H1 (cell line): ENCODE measurements at regions of chr11 and their contacts with region 1.

Region 1: GRCh38 chr11:19071255-19071654 is 10.7 kb upstream of the MRGPRX2 start:
- DNase-seq: peak; percentile 43 to 75
- H3K4me3 ChIP-seq: no peak overlapping the region
- H3K27ac ChIP-seq: no peak overlapping the region
- H3K4me1 ChIP-seq: peaks cover 2 to 8% (median 7%) of the 10 kb centered on the region in 4 experiments; a peak in 4 of 7 replicates
- H3K27me3 ChIP-seq: no peaks in the 10 kb centered on the region
- CTCF ChIP-seq: peak; percentile 57 to 100 (median 95)
- EP300 ChIP-seq: no peak; a peak in 1 of 3 replicates
- POLR2A ChIP-seq: no peak
- RAD21 ChIP-seq: peak; percentile 93 to 96

Region 2: DNA sequence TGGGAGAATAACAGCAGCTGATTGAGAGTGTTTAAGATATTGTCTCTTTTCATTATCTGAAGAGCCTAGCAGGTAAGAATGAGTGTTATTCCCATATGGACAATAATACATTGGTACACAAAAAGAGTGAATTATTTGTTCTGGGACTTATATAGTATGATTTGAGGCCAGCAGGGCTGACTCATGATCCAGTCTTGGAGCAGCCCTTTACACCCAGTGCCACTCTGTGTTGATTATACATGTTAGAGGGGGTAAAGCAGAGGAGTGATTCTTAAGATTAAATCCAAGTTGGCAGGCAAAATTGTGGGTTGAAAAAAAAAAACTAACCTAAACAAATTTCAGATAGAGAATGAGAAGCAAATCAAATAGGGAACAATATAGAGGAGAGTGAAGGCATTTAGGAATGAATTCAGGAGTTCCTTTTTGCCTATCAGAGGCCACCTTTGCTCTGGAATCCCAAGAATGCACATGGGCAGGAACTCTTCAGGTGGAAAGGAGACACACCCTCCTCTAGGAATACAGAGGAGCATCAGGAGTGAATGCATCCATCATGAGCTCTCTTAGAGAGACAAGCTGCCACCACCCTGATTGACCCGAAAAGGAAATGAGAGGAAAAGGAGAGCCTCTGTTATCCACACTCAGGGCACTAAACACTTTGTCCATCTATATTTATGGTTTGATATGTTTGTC is 112.9 kb before region 1 on chr11:
- CTCF ChIA-PET with region 1: no interaction called
- POLR2A ChIA-PET with region 1: no interaction called
- DNase-seq: peak in 1 of 2 experiments; percentile 9
- H3K4me3 ChIP-seq: no peak overlapping the region
- H3K27ac ChIP-seq: no peak overlapping the region
- H3K4me1 ChIP-seq: peaks cover 0 to 10% (median 5%) of the 10 kb centered on the region in 4 experiments; a peak in 3 of 7 replicates
- H3K27me3 ChIP-seq: no peaks in the 10 kb centered on the region
- CTCF ChIP-seq: no peak
- EP300 ChIP-seq: no peak
- POLR2A ChIP-seq: no peak
- RAD21 ChIP-seq: no peak

Region 3: DNA sequence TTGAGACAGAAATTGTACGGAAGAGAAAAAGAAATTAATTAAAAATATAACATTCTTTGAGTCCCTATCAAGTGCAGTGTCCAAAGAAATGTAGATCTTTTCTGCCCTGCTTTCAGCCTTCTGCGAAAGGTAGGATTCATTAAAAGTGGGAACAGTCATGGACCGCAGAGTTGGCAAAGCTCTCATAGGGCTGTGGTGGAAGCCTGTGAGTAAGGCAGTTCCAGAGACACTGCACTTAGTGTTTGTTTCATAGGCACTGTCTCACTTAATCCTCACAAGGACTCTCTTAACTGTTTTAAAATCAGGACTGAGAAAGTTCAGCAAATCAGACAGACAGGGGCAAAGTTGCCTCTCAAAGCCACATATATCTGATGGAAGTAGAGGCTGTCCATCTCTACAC is 16.2 kb before region 1 on chr11:
- CTCF ChIA-PET with region 1: interaction called, 29 read pairs
- POLR2A ChIA-PET with region 1: no interaction called
- DNase-seq: no peak
- H3K4me3 ChIP-seq: no peak overlapping the region
- H3K27ac ChIP-seq: no peak overlapping the region
- H3K4me1 ChIP-seq: no peaks in the 10 kb centered on the region
- H3K27me3 ChIP-seq: no peaks in the 10 kb centered on the region
- CTCF ChIP-seq: no peak
- EP300 ChIP-seq: no peak
- POLR2A ChIP-seq: no peak
- RAD21 ChIP-seq: no peak

Region 4: GRCh38 chr11:19060629-19061028 is 10.6 kb before region 1 on chr11 and contains the start of gene MRGPRX2:
- CTCF ChIA-PET with region 1: interaction called, 29 read pairs
- POLR2A ChIA-PET with region 1: no interaction called
- DNase-seq: no peak
- H3K4me3 ChIP-seq: no peak within 1 kb of the TSS
- H3K27ac ChIP-seq: no peak within 1 kb of the TSS
- H3K4me1 ChIP-seq: no peaks in the 10 kb centered on the region
- H3K27me3 ChIP-seq: no peaks in the 10 kb centered on the region
- CTCF ChIP-seq: no peak
- EP300 ChIP-seq: no peak
- POLR2A ChIP-seq: no peak
- RAD21 ChIP-seq: no peak
- total RNA-seq, gene MRGPRX2: not detected in 2 replicates

Region 5: GRCh38 chr11:19087658-19088057 is 16.4 kb after region 1 on chr11:
- CTCF ChIA-PET with region 1: interaction called, 34 read pairs
- POLR2A ChIA-PET with region 1: no interaction called
- DNase-seq: no peak
- H3K4me3 ChIP-seq: no peak overlapping the region
- H3K27ac ChIP-seq: no peak overlapping the region
- H3K4me1 ChIP-seq: no peaks in the 10 kb centered on the region
- H3K27me3 ChIP-seq: no peaks in the 10 kb centered on the region
- CTCF ChIP-seq: no peak
- EP300 ChIP-seq: no peak
- POLR2A ChIP-seq: no peak
- RAD21 ChIP-seq: no peak

Region 6: DNA sequence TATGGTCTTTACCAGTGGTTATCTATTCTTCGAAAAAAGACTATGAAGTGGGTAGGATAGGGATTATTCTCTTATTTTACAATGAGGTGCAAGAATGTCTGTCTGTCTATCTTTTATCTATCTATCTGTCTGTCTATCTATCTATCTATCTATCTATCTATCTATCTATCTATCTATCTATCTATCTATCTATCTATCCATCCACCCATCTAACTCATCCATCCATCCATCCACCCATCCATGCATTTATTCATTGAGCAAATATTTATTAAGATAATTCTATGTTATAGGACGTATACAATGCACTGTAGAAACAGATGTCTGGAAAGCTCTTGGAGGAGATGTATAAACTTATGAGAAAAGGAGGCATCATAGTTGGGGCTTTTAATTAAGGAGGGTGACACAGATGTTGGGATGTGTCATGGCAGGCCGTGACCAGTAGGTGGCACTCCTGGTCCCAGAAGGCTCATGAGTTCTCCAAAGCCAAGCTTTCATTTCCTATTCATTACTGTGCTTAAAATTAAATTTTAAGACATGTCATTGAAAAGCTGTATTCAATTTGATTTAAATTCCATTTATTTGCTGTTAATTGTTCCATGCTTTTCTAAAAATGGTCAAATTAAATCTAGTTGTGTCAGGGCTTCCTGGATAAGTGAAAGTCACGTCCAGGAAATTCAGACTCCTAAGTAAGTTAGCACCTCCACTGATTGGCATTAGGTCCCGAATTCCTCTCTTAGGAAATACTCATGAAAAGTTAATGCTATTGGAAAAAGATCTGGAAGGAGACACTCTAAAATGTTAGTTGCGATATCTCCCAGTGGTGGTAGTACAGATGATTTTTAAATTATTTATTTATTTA is 188.5 kb after region 1 on chr11:
- CTCF ChIA-PET with region 1: interaction called, 14 read pairs
- POLR2A ChIA-PET with region 1: no interaction called
- DNase-seq: peak in 1 of 2 experiments; percentile 83
- H3K4me3 ChIP-seq: no peak overlapping the region
- H3K27ac ChIP-seq: no peak overlapping the region
- H3K4me1 ChIP-seq: peaks cover 0 to 5% (median 3%) of the 10 kb centered on the region in 4 experiments; a peak in 4 of 7 replicates
- H3K27me3 ChIP-seq: no peaks in the 10 kb centered on the region
- CTCF ChIP-seq: peak; percentile 66 to 89 (median 81)
- EP300 ChIP-seq: no peak
- POLR2A ChIP-seq: no peak
- RAD21 ChIP-seq: peak; percentile 78 to 80

Region 7: DNA sequence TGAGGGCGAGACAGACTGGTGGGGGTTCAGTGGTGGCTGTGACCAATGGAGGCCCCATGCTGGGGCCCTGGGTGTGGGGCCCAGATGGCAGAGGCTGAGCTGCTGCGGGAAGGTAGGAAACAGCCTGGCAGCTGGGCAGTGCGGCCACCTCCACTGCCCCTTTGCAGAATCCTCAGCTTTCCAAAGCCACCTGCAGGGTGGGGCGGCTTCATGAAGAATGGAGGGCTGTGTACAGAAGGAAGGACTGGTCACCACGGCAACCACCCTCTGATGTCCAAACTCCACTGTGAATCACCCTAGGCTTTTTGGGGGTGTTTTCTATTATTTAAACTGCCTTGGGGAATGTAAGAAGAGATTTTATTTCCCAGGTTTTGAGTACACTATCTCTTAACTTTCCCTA is 475.1 kb after region 1 on chr11:
- CTCF ChIA-PET with region 1: interaction called, 13 read pairs
- POLR2A ChIA-PET with region 1: no interaction called
- DNase-seq: no peak
- H3K4me3 ChIP-seq: no peak overlapping the region
- H3K27ac ChIP-seq: no peak overlapping the region
- H3K4me1 ChIP-seq: no peaks in the 10 kb centered on the region; a peak in 2 of 7 replicates
- H3K27me3 ChIP-seq: no peaks in the 10 kb centered on the region
- CTCF ChIP-seq: no peak
- EP300 ChIP-seq: no peak
- POLR2A ChIP-seq: no peak
- RAD21 ChIP-seq: no peak